ENCODE measurements at regions of chr1 and their contacts with region 1.

Region 1: GRCh38 chr1:18972531-18972930 is 16.1 kb upstream of the IFFO2 start:
- DNase-seq: no peak
- ATAC-seq: no peak
- H3K4me3 ChIP-seq: no peak overlapping the region
- H3K27ac ChIP-seq: no peak overlapping the region
- H3K4me1 ChIP-seq: peaks cover 3% of the 10 kb centered on the region
- H3K27me3 ChIP-seq: no peaks in the 10 kb centered on the region
- CTCF ChIP-seq: peak; percentile 53

Region 2: DNA sequence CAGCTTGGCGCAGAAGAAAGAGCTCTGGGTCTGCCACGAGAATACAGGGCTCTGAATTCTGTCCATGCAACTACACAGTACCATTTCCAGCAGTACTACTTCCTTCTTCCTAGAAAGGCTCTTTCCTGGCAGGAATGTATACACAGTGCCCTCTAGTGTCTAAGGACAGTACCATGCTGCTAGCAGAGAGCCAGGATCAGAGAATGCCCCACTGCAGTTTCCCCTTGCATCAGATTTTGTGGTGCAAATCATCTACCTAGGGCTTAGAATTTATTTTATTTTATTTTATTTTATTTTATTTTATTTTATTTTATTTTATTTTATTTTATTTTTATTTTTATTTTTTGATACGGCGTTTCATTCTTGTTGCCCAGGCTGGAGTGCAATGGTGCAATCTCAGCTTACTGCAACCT is 291.1 kb before region 1 on chr1:
- intact Hi-C with region 1: no loop called
- DNase-seq: no peak
- ATAC-seq: peak; percentile 86
- H3K4me3 ChIP-seq: no peak overlapping the region
- H3K27ac ChIP-seq: no peak overlapping the region
- H3K4me1 ChIP-seq: no peaks in the 10 kb centered on the region
- H3K27me3 ChIP-seq: peaks cover 43% of the 10 kb centered on the region
- CTCF ChIP-seq: peak; percentile 66

Region 3: GRCh38 chr1:18913065-18913835 is 59.3 kb before region 1 on chr1:
- intact Hi-C with region 1: loop called (anchors 10 kb)
- DNase-seq: peak; percentile 92
- ATAC-seq: peak; percentile 94
- H3K4me3 ChIP-seq: peak overlapping the region; percentile 16
- H3K27ac ChIP-seq: peak overlapping the region; percentile 79
- H3K4me1 ChIP-seq: peaks cover 19% of the 10 kb centered on the region
- H3K27me3 ChIP-seq: no peaks in the 10 kb centered on the region
- CTCF ChIP-seq: peak; percentile 98